Posterior cingulate gyrus (tissue), 11 donors: ENCODE measurements at regions of chr12 and their contacts with region 1.

Region 1: DNA sequence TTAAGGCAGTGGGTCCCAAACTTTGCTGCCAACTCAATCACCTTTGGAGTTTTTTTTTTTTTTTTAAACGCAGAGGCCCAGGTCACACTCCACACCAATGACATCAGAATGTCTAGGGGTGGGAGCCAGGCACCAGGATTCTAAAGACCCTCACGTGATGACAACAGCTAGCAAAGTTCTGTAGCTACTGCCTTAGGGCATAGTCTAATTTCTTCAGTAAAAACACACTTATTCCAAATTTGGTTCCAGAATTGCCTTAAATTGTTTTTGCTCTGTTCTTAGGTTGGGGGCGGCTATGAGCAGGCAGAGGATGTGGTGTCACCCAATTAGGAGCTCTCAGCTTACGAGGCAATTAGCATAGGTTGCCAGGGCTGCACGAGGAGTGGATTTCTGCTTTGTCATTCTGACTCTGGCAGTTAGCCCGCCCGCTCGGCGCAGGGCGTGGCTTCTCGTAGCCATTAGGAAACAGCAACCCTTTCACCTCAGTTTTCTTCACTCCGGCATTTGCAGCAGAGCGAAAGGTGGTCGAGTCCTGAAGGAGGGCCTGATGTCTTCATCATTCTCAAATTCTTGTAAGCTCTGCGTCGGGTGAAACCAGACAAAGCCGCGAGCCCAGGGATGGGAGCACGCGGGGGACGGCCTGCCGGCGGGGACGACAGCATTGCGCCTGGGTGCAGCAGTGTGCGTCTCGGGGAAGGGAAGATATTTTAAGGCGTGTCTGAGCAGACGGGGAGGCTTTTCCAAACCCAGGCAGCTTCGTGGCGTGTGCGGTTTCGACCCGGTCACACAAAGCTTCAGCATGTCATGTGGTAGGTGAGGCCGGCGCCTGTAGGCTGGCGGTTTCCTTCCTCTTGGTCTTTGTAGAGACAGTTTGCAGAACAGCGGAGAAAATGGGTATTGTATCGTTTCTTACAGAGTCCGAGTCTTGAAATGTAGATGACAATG is 16.7 kb upstream of the EID3 start:
- DNase-seq: peak; percentile 78 to 97 (median 86)

Region 2: GRCh38 chr12:104064031-104064822 is 222.6 kb before region 1 on chr12 and contains the start of gene HCFC2:
- intact Hi-C with region 1: no loop called
- DNase-seq: peak; percentile 88 to 99 (median 92)

Region 3: DNA sequence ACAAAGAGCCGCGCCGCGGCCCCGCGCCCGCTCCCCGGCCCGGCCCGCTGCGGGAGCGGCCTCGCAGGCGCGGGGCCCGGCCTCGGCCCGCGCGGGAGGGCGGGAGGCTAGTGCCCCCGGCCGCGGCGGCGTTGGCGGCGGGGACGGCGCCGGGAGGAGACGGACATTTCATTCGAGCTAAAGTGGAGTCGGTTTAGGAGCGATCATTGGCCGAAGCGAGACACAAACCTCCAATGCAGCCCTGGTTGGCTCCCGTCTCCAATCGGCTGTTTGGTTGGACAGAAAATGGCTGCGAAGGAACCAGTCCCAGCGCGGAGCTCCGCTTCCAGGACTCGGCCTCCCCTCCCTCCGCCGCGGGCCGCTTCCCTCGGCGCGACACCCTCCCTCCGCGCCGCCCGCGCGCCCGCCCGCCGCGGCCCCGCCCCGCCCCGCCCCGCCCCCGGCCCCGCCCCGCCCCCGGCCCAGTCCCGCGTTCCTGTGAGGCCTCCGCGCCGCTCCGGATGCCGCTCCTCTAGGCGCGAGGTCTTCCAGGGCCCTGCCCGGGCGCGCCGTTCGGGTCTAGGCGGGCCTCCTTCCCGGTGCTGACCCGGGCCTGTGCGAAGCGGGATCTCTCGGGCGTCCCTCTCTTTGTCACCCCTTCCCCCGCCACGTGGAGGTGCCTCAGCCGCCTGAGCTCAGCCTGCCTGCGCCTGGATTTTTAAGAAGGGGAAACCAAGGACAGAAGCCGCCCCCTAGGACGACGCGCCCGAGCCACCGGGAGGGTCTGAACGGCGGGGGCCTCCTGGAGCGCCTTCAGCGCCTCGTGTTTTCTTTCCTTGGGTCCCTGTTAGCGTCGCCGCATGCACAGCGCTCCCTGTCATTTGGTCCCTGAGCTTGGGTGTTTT is 148.7 kb before region 1 on chr12 and contains the start of gene NFYB:
- intact Hi-C with region 1: loop called (anchors 5 kb)
- DNase-seq: peak; percentile 89 to 99 (median 94)

Region 4: GRCh38 chr12:104215638-104216297 is 71.0 kb before region 1 on chr12 and contains the start of gene TXNRD1:
- intact Hi-C with region 1: loop called (anchors 2 kb)
- DNase-seq: peak; percentile 50 to 95 (median 64)

Region 5: DNA sequence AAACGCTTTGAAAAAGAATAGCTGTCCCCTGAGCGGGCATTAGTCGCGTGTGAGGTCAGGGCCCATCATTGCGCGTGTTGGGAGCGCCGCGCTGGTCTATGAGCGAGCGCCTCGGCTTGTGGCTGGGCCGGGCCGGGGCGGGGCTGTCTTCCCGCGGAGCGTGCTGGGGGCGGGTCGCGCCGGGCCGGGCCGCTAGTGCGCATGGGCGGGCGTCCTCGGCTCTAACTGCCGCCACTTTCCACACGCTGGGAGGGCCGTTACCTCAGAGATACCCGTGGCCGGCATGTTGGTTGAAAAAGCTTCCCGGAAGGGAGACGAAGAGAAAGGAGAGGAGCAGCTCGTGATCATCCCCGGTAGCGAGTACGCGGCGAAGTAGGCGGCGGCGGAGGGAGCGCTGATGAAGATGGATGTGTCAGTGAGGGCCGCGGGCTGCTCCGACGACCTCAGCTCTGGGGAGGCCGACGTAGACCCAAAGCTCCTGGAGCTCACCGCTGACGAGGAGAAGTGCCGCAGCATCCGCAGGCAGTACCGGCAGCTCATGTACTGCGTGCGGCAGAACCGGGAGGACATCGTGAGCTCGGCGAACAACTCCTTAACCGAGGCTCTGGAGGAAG is 16.8 kb after region 1 on chr12 and contains the start of gene EID3:
- intact Hi-C with region 1: loop called (anchors 2 kb)
- DNase-seq: peak; percentile 83 to 98 (median 90)